Activated CD4-positive, alpha-beta memory T cell treated with anti-CD3 and anti-CD28 coated beads for 36 hours (primary cell): ENCODE measurements at regions of chr14 and their contacts with region 1.

Region 1: DNA sequence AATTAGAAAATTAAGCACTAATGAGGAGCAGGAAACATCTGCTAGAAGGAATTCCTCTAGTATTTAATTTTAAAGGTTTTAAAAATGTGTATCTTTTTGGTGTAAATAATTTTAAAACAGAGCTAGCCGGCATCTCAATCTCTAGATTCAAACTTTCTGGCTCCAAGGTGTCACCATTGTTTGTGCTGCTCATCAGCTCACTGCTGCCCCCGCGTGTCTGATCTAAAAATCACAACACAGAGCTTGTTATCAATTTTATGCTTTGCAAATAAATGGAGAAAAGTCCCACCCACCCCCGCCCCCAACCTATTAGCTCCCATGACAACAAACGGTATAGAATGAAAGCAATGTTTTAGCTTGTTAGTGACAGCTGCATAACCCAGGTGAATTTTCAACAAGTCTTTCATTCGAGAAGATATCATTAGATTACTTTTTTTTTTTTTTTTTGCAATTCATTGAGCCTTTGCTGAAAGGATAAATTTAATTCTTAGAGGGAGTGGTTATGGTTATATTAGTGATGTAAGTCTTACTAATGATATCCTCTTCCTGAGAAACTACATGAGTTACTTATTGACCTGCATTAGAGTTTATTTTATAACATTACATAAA is 11.3 kb upstream of the ABHD12B start:
- DNase-seq: peak; percentile 91
- H3K4me3 Mint-ChIP-seq: peak overlapping the region; percentile 80
- H3K27ac Mint-ChIP-seq: no peak overlapping the region
- H3K4me1 Mint-ChIP-seq: peaks cover 11% of the 10 kb centered on the region
- H3K27me3 Mint-ChIP-seq: no peaks in the 10 kb centered on the region

Region 2: GRCh38 chr14:50599700-50600444 is 260.7 kb before region 1 on chr14:
- CTCF ChIA-PET with region 1: interaction called, 24 read pairs
- POLR2A ChIA-PET with region 1: interaction called, 3 read pairs
- intact Hi-C with region 1: loop called (anchors 1 kb)
- DNase-seq: no peak
- H3K4me3 Mint-ChIP-seq: no peak overlapping the region
- H3K27ac Mint-ChIP-seq: no peak overlapping the region
- H3K4me1 Mint-ChIP-seq: peaks cover 4% of the 10 kb centered on the region
- H3K27me3 Mint-ChIP-seq: no peaks in the 10 kb centered on the region

Region 3: GRCh38 chr14:50667996-50668825 is 192.4 kb before region 1 on chr14 and contains the start of gene SAV1:
- CTCF ChIA-PET with region 1: interaction called, 3 read pairs
- POLR2A ChIA-PET with region 1: no interaction called
- intact Hi-C with region 1: loop called (anchors 2 kb)
- DNase-seq: peak; percentile 67
- H3K4me3 Mint-ChIP-seq: no peak within 1 kb of the TSS
- H3K27ac Mint-ChIP-seq: peak within 1 kb of the TSS; percentile 63
- H3K4me1 Mint-ChIP-seq: peaks cover 18% of the 10 kb centered on the region
- H3K27me3 Mint-ChIP-seq: no peaks in the 10 kb centered on the region
- total RNA-seq, gene SAV1: 13.4 to 13.5 TPM

Region 4: DNA sequence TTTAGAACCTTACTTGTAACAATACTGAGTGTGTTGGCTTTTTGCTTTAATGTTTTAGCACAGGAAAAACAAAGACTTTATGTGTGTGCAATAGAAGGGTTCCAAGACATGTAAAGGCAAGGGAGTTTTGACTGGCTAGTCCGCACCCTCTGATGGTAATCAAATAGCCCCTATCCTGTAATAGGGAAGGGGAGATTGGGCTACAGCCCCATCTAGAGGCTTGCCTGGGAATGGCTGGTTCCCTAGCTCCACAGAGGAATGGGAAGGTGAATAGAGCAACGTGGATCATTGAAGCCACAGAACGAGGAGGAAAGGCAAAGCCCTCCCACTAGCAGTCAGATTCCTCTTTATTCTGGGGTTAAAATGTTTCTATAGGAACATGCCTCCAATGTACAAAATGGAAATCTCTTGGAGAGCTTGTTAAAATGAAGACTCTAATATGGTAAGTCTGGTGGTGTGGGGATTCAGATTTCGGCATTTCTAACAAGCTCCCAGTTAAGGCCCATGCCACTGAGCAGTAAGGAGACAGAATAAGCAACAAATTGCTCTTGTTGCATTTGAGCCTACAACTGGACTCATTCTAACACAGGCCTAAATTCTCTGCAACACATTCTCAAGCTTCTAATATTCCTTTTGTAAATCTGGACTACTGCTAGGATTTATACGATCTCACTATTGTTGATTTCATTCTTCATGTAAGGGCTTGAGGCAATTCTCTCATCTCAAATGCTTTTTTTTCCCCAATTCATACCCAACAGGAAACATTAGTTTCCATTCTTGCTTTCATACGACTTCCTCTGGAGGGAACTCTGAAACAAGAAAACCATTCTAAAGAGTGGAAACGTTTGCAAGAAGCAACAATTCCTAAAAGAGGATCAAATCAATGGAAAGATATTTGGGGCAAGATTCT is 86.7 kb before region 1 on chr14:
- CTCF ChIA-PET with region 1: interaction called, 123 read pairs
- POLR2A ChIA-PET with region 1: interaction called, 3 read pairs
- intact Hi-C with region 1: loop called (anchors 1 kb)
- DNase-seq: peak; percentile 56
- H3K4me3 Mint-ChIP-seq: no peak overlapping the region
- H3K27ac Mint-ChIP-seq: no peak overlapping the region
- H3K4me1 Mint-ChIP-seq: peaks cover 16% of the 10 kb centered on the region
- H3K27me3 Mint-ChIP-seq: no peaks in the 10 kb centered on the region

Region 5: GRCh38 chr14:50792051-50792477 is 68.5 kb before region 1 on chr14:
- CTCF ChIA-PET with region 1: interaction called, 27 read pairs
- POLR2A ChIA-PET with region 1: interaction called, 3 read pairs
- intact Hi-C with region 1: loop called (anchors 1 kb)
- DNase-seq: peak; percentile 22
- H3K4me3 Mint-ChIP-seq: peak overlapping the region; percentile 50
- H3K27ac Mint-ChIP-seq: peak overlapping the region; percentile 60
- H3K4me1 Mint-ChIP-seq: peaks cover 44% of the 10 kb centered on the region
- H3K27me3 Mint-ChIP-seq: no peaks in the 10 kb centered on the region

Region 6: DNA sequence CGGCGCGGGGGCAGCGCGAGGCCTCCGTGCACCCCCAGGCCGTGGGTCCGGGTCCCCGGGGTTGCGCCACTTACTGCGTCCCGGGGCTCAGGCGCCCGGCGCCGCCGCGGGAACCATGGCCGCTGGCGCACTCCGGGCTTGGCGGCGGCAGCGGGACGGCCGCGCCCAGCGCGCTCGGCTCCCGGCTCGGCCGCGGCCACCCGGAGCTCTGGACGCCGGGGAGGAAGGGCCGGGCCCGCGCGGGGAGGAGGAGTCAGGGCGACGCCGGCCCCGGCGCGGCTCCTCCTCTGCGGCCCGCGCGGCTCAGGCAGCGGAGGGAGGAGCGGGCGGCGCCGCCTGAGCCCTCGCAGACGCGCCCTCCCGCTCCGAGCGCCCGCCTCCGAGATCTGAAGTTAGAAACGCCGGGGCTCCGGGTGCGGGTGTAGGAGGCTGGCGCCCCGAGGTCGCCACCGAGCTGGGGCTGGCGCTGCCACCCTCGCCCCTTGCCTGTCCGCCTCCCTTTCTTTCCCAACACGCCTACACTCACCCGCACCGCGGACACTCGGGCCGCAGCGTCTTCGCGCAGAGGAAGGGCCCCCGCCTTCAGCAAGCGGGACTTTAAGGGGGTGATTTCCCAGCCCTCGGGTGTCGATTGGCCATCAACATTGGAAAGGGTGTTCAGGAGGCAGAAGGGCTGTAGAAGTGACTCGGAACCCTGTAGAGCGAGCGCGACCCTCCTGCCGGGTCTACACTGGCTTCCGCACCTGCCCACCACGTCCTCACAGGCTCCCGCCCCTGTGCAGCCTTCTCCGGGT is 29.5 kb before region 1 on chr14 and contains the start of gene NIN:
- CTCF ChIA-PET with region 1: interaction called, 25 read pairs
- POLR2A ChIA-PET with region 1: interaction called, 9 read pairs
- intact Hi-C with region 1: loop called (anchors 2 kb)
- DNase-seq: peak; percentile 77
- H3K4me3 Mint-ChIP-seq: peak within 1 kb of the TSS; percentile 92
- H3K27ac Mint-ChIP-seq: peak within 1 kb of the TSS; percentile 86
- H3K4me1 Mint-ChIP-seq: peaks cover 54% of the 10 kb centered on the region
- H3K27me3 Mint-ChIP-seq: peaks cover 6% of the 10 kb centered on the region
- total RNA-seq, gene NIN: 44.7 to 44.8 TPM

Region 7: GRCh38 chr14:50875359-50876070 is 14.9 kb after region 1 on chr14:
- CTCF ChIA-PET with region 1: interaction called, 16 read pairs
- POLR2A ChIA-PET with region 1: no interaction called
- intact Hi-C with region 1: no loop called
- DNase-seq: peak; percentile 86
- H3K4me3 Mint-ChIP-seq: no peak overlapping the region
- H3K27ac Mint-ChIP-seq: no peak overlapping the region
- H3K4me1 Mint-ChIP-seq: peaks cover 27% of the 10 kb centered on the region
- H3K27me3 Mint-ChIP-seq: peaks cover 54% of the 10 kb centered on the region